Activated B cell treated with CpG ODN at 0.5 μM for 24 hours (primary cell): ENCODE measurements at regions of chr1 and their contacts with region 1.

Region 1: DNA sequence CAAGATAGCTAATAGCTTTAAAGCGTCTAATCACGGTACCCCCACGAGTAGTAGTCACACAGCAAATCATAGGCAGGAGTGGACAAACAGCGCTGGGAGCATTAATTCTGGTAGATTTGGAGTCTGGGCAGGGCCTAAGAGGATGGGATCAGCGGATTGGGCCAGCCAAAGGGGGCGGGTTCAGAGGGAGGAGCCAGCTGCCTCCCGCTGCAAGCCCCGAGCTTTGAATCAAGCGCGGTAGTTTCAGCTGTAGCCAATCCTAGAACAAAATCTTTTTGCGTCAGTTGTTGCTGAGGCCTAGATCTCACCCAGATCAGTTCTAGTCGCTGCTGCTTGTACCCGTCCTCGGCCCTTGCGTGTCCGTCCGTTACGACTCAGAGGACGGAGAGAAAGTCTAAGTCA is 576 bp upstream of the NASP start:
- DNase-seq: peak; percentile 84
- ATAC-seq: peak; percentile 79
- H3K4me3 Mint-ChIP-seq: peak overlapping the region; percentile 98
- H3K27ac Mint-ChIP-seq: peak overlapping the region; percentile 96
- H3K4me1 Mint-ChIP-seq: peaks cover 46% of the 10 kb centered on the region
- H3K27me3 Mint-ChIP-seq: no peaks in the 10 kb centered on the region
- CTCF ChIP-seq: no peak

Region 2: GRCh38 chr1:44730741-44731512 is 852.3 kb before region 1 on chr1 and contains the start of gene RNU5D-1:
- CTCF ChIA-PET with region 1: no interaction called
- POLR2A ChIA-PET with region 1: interaction called, 18 read pairs
- intact Hi-C with region 1: no loop called
- DNase-seq: peak; percentile 84
- ATAC-seq: peak; percentile 71
- H3K4me3 Mint-ChIP-seq: peak within 1 kb of the TSS; percentile 78
- H3K27ac Mint-ChIP-seq: peak within 1 kb of the TSS; percentile 100
- H3K4me1 Mint-ChIP-seq: peaks cover 37% of the 10 kb centered on the region
- H3K27me3 Mint-ChIP-seq: no peaks in the 10 kb centered on the region
- CTCF ChIP-seq: peak; percentile 39
- total RNA-seq, gene RNU5D-1: not detected in 2 replicates

Region 3: GRCh38 chr1:45393718-45394302 is 189.5 kb before region 1 on chr1:
- CTCF ChIA-PET with region 1: no interaction called
- POLR2A ChIA-PET with region 1: interaction called, 11 read pairs
- intact Hi-C with region 1: loop called (anchors 1 kb)
- DNase-seq: peak; percentile 41
- ATAC-seq: peak; percentile 88
- H3K4me3 Mint-ChIP-seq: peak overlapping the region; percentile 62
- H3K27ac Mint-ChIP-seq: peak overlapping the region; percentile 94
- H3K4me1 Mint-ChIP-seq: peaks cover 52% of the 10 kb centered on the region
- H3K27me3 Mint-ChIP-seq: no peaks in the 10 kb centered on the region
- CTCF ChIP-seq: no peak

Region 4: GRCh38 chr1:45512641-45513054 is 70.6 kb before region 1 on chr1:
- CTCF ChIA-PET with region 1: interaction called, 16 read pairs
- POLR2A ChIA-PET with region 1: interaction called, 5 read pairs
- intact Hi-C with region 1: no loop called
- DNase-seq: no peak
- ATAC-seq: peak; percentile 80
- H3K4me3 Mint-ChIP-seq: no peak overlapping the region
- H3K27ac Mint-ChIP-seq: no peak overlapping the region
- H3K4me1 Mint-ChIP-seq: peaks cover 5% of the 10 kb centered on the region
- H3K27me3 Mint-ChIP-seq: no peaks in the 10 kb centered on the region
- CTCF ChIP-seq: peak; percentile 18

Region 5: GRCh38 chr1:45550401-45551351 is 32.6 kb before region 1 on chr1 and contains the start of gene AKR1A1:
- CTCF ChIA-PET with region 1: no interaction called
- POLR2A ChIA-PET with region 1: interaction called, 55 read pairs
- intact Hi-C with region 1: loop called (anchors 1 kb)
- DNase-seq: peak; percentile 91
- ATAC-seq: peak; percentile 91
- H3K4me3 Mint-ChIP-seq: peak within 1 kb of the TSS; percentile 99
- H3K27ac Mint-ChIP-seq: peak within 1 kb of the TSS; percentile 95
- H3K4me1 Mint-ChIP-seq: peaks cover 35% of the 10 kb centered on the region
- H3K27me3 Mint-ChIP-seq: no peaks in the 10 kb centered on the region
- CTCF ChIP-seq: no peak
- total RNA-seq, gene AKR1A1: 215 and 218 TPM in 2 replicates

Region 6: DNA sequence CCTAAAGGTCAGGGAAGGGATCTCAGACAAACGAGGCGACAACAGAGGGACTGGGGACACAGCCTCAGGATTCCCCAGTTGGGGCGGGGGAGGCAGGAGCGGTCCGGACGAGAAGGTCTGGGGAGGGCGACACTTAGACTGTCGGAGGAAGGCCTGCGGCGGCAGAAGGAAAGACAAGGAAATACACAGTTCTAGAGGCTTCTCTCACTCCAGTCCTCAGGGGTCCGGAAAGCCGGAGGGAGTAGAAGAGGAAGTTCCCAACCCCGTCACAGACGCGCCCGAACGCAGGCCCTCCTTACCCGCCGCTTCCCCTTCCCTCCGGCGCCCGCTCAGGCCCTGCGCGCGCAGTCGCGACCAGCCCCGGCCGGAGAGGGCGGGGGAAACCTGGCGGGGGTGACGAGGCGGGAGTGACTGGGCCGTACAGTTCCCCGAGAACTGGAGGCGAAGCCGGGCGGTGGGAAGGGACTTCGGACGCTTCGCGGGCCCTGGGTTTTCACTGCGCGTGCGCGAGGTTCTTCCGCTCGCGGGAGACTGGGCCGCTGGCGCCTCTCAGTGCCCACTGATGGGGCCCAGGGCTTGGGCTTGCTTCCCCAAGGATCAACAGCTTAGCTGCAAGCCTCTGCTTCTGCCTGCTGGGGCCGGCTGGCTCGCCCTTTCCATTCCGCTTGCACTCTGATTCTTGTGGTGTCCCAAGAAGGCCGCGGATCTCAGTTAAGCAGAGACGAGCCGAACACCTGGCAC is 167.2 kb after region 1 on chr1 and contains the start of gene IPP:
- CTCF ChIA-PET with region 1: no interaction called
- POLR2A ChIA-PET with region 1: no interaction called
- intact Hi-C with region 1: loop called (anchors 1 kb)
- DNase-seq: peak; percentile 96
- ATAC-seq: peak; percentile 95
- H3K4me3 Mint-ChIP-seq: peak within 1 kb of the TSS; percentile 93
- H3K27ac Mint-ChIP-seq: peak within 1 kb of the TSS; percentile 99
- H3K4me1 Mint-ChIP-seq: peaks cover 17% of the 10 kb centered on the region
- H3K27me3 Mint-ChIP-seq: no peaks in the 10 kb centered on the region
- CTCF ChIP-seq: no peak
- total RNA-seq, gene IPP: 10.2 and 11.4 TPM in 2 replicates